Caco-2 (cell line): ENCODE measurements at regions of chr9 and their contacts with region 1.

Region 1: DNA sequence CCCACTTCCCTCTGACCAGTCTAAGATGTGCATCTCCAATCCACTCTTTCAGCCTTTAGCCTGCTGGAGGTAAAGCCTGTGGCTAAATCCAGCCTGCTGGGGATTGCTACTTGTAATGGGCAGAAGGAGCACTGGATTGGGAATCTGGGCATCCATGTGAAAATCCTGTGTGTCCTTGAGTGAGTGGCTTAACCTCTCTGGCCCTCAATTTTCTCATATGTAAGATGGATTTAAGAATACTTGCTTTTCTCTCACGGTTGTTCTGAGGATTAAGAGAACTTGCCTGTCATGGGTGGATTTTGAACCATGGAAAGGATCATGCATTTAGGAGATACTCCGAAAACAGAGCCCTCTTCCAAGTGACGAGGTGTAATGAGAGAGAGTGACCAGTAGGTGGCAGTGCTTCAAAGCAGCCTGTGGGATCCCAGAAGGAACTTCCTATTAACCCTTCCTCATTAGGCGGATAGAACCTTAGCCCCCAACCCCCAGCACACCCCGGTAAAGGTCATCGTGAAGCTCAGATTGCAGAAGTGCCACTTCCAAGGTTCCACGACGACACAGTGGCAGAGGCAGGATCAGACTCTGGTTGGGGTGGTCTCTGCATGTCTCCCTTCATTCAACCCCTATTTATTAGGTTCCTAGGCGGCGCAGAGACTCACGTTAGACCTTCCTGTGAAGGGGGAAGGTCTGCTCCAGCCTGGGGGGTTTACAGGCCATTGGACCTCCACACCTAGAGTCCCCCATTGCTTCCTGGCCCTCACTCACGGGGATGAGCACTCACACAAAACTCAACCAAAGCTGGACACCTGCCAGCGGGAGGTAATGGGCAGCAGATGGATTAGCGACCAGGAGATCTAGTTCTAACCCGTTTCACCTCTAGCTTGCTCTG is 68.7 kb upstream of the ZNF618 start:
- DNase-seq: peak; percentile 46 to 52
- H3K4me3 ChIP-seq: no peak overlapping the region
- H3K4me3 Mint-ChIP-seq: no peak overlapping the region
- H3K27ac Mint-ChIP-seq: no peak overlapping the region
- H3K4me1 ChIP-seq: no peaks in the 10 kb centered on the region
- H3K4me1 Mint-ChIP-seq: no peaks in the 10 kb centered on the region
- H3K27me3 ChIP-seq: no peaks in the 10 kb centered on the region; the same call in 1 of the 2 replicates
- H3K27me3 Mint-ChIP-seq: peaks cover 3% of the 10 kb centered on the region
- CTCF ChIP-seq: peak; percentile 78 to 89

Region 2: GRCh38 chr9:113682297-113682771 is 125.1 kb before region 1 on chr9:
- CTCF ChIA-PET with region 1: no interaction called
- POLR2A ChIA-PET with region 1: no interaction called
- intact Hi-C with region 1: loop called (anchors 5 kb)
- DNase-seq: peak; percentile 75 to 82
- H3K4me3 ChIP-seq: no peak overlapping the region
- H3K4me3 Mint-ChIP-seq: no peak overlapping the region
- H3K27ac Mint-ChIP-seq: no peak overlapping the region
- H3K4me1 ChIP-seq: no peaks in the 10 kb centered on the region
- H3K4me1 Mint-ChIP-seq: no peaks in the 10 kb centered on the region
- H3K27me3 ChIP-seq: no peaks in the 10 kb centered on the region; the same call in 1 of the 2 replicates
- H3K27me3 Mint-ChIP-seq: peaks cover 29% of the 10 kb centered on the region
- CTCF ChIP-seq: peak; percentile 82 to 88

Region 3: DNA sequence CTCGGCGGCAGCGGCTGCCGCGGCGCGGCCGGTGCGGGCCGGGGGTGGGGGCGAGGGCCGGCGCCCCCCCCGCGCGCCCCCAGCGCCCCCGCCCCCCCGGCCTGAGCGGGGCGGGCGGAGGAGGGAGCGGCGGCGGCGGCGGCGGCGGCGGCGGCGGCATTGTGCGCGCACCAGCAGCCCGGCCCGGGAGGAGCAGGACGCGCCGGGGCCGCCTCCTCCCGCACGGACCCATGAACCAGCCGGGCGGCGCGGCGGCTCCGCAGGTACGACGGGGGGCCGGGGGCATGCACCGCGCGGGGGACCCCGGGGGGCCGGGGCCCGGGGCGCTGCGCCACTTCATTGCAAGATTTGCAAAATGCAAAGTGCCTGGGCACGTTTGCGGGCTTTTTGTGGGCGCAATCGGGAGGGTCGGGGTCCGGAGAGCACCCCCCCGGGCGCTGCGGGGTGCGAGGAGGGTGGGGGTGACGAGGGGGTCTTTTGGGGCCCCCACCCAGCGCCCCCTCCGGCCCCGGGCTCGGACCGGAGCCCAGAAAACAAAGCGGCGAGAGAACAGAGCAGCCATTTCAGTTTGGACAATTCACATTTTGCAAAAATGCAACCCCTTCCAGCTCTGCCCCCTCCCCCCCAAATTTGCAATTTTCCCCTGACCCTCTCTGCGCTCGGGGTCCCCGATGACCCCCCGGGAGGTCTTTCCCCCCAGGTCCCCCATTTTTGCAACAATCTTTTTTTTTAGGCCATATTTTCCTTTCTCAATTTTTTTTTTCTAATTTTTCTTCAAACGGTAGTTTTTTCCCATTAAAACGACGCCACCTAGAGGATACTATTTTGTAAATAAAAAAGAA is 69.0 kb after region 1 on chr9 and contains the start of gene ZNF618:
- CTCF ChIA-PET with region 1: no interaction called
- POLR2A ChIA-PET with region 1: no interaction called
- intact Hi-C with region 1: loop called (anchors 2 kb)
- DNase-seq: peak in 1 of 2 experiments; percentile 43
- H3K4me3 ChIP-seq: peak within 1 kb of the TSS; percentile 76
- H3K4me3 Mint-ChIP-seq: peak within 1 kb of the TSS; percentile 94
- H3K27ac Mint-ChIP-seq: peak within 1 kb of the TSS; percentile 94
- H3K4me1 ChIP-seq: no peaks in the 10 kb centered on the region; the same call in 1 of the 2 replicates
- H3K4me1 Mint-ChIP-seq: peaks cover 7% of the 10 kb centered on the region
- H3K27me3 ChIP-seq: no peaks in the 10 kb centered on the region
- H3K27me3 Mint-ChIP-seq: peaks cover 19% of the 10 kb centered on the region
- CTCF ChIP-seq: peak in 1 of 2 experiments; percentile 44
- total RNA-seq, gene ZNF618: 1.2 and 1.5 TPM in 2 replicates

Region 4: DNA sequence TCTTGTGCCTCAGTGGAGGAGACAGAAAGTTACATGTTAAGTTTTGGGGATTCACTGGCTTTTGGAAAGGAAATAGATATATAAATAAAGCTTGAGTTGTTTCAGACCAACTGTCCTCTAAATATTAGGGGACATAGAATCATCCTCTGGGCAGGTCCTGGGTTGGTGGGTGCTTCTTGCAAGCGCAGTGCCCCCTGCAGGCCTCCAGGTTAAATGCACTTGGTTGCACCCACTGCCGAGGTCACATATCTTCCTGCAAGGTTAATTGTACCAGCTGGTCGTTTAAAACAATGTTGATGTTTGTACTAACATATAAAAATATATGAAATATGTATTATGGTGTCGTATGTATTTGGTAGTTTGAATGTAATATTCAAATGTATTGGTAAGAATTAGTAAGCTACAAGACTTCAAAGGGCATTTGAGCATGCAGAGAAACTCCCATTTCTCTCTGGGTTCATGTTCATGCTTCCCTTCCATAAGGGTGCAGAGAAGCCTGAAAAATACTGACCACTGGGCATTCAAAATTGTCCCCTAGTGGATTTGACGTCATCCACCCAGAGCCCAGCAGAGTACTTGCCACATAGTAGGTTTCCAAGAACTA is 155.7 kb after region 1 on chr9:
- CTCF ChIA-PET with region 1: no interaction called
- POLR2A ChIA-PET with region 1: no interaction called
- intact Hi-C with region 1: loop called (anchors 5 kb)
- DNase-seq: peak in 1 of 2 experiments; percentile 25
- H3K4me3 ChIP-seq: no peak overlapping the region
- H3K4me3 Mint-ChIP-seq: no peak overlapping the region
- H3K27ac Mint-ChIP-seq: no peak overlapping the region
- H3K4me1 ChIP-seq: peaks cover under 1% of the 10 kb centered on the region; the same call in 1 of the 2 replicates
- H3K4me1 Mint-ChIP-seq: peaks cover 14% of the 10 kb centered on the region
- H3K27me3 ChIP-seq: no peaks in the 10 kb centered on the region
- H3K27me3 Mint-ChIP-seq: no peaks in the 10 kb centered on the region
- CTCF ChIP-seq: peak; percentile 19 to 39

Region 5: GRCh38 chr9:114047717-114048116 is 240.3 kb after region 1 on chr9:
- CTCF ChIA-PET with region 1: no interaction called
- POLR2A ChIA-PET with region 1: no interaction called
- intact Hi-C with region 1: loop called (anchors 5 kb)
- DNase-seq: no peak
- H3K4me3 ChIP-seq: no peak overlapping the region
- H3K4me3 Mint-ChIP-seq: no peak overlapping the region
- H3K27ac Mint-ChIP-seq: no peak overlapping the region
- H3K4me1 ChIP-seq: no peaks in the 10 kb centered on the region
- H3K4me1 Mint-ChIP-seq: no peaks in the 10 kb centered on the region
- H3K27me3 ChIP-seq: no peaks in the 10 kb centered on the region
- H3K27me3 Mint-ChIP-seq: no peaks in the 10 kb centered on the region
- CTCF ChIP-seq: peak; percentile 30 to 34

Region 6: GRCh38 chr9:114093761-114094505 is 286.5 kb after region 1 on chr9:
- CTCF ChIA-PET with region 1: no interaction called
- POLR2A ChIA-PET with region 1: no interaction called
- intact Hi-C with region 1: no loop called
- DNase-seq: no peak
- H3K4me3 ChIP-seq: no peak overlapping the region
- H3K4me3 Mint-ChIP-seq: no peak overlapping the region
- H3K27ac Mint-ChIP-seq: no peak overlapping the region
- H3K4me1 ChIP-seq: peaks cover 8% of the 10 kb centered on the region
- H3K4me1 Mint-ChIP-seq: peaks cover 13% of the 10 kb centered on the region
- H3K27me3 ChIP-seq: no peaks in the 10 kb centered on the region
- H3K27me3 Mint-ChIP-seq: no peaks in the 10 kb centered on the region
- CTCF ChIP-seq: no peak